AG04450 (cell line): ENCODE measurements at regions of chr1 and their contacts with region 1.

Region 1: DNA sequence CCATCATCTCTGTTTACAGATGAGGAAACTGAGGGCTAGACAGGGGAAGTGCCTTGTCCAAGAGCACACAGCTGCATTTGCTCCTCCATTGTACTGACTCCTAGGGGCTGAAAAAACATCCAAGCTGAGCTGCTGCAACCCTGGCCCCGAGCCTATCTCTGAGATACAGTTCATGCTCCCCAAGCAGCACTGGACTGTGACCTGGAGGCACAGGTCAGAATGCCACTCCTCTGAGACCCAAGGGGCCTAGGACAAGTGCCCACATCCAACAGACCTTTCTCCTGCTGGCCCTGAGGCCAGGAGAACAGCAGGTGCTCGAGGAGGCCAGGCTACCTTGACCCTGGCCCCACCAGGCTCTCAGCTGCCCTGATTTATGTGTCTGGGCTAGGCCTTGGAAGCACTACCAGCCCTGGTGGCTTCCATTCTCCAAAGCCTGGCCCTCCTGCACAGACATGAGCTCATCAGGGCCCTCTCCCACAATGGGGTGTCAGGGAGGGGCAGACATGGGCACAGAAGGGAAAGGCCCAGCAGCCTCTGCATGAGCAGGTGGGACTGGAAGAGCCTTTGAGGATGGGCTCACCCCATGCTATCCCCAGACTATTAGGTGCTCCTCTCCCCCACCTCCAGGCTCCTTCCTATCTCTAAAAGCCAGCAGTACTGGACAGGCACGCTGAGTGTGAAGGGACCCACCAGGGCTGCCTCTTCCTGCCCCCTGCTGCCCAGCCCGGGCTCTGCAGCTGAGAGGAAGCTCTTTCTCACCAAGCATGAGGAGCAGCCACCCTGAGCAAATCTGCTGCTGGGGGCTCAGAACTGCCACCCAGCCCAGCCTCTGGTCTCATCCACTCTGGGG is 18.8 kb downstream of the ADGRB2 start:
- DNase-seq: no peak
- H3K4me3 ChIP-seq: no peak overlapping the region
- H3K27ac ChIP-seq: no peak overlapping the region
- H3K27me3 ChIP-seq: no peaks in the 10 kb centered on the region
- CTCF ChIP-seq: peak; percentile 86

Region 2: GRCh38 chr1:31593770-31594632 is 151.3 kb before region 1 on chr1:
- CTCF ChIA-PET with region 1: no interaction called
- POLR2A ChIA-PET with region 1: no interaction called
- DNase-seq: peak; percentile 46
- H3K4me3 ChIP-seq: no peak overlapping the region
- H3K27ac ChIP-seq: no peak overlapping the region
- H3K27me3 ChIP-seq: peaks cover 9% of the 10 kb centered on the region
- CTCF ChIP-seq: peak; percentile 97

Region 3: GRCh38 chr1:31663622-31664452 is 81.5 kb before region 1 on chr1:
- CTCF ChIA-PET with region 1: interaction called, 21 read pairs
- POLR2A ChIA-PET with region 1: interaction called, 3 read pairs
- DNase-seq: no peak
- H3K4me3 ChIP-seq: no peak overlapping the region
- H3K27ac ChIP-seq: no peak overlapping the region
- H3K27me3 ChIP-seq: no peaks in the 10 kb centered on the region
- CTCF ChIP-seq: peak; percentile 92

Region 4: DNA sequence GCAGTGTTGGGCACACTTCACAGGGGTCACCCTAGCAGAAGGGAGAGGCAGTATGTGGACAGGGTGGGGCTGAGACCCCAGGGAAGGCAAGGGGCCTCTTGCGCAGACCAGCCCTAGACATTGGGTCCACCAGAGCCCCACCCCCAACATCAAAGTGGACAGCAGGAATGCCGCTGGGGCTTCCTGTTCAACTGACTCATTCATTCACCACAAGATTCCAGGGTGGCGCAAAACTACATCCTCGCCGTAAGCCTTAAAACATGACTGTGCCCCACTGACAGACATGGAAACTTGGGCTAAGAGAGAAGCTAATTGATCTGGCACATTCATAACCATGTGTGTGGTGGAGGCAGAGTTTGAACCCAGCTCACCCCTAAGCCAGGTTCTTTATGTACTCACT is 55.5 kb before region 1 on chr1:
- CTCF ChIA-PET with region 1: no interaction called
- POLR2A ChIA-PET with region 1: no interaction called
- DNase-seq: peak; percentile 85
- H3K4me3 ChIP-seq: no peak overlapping the region
- H3K27ac ChIP-seq: peak overlapping the region; percentile 93
- H3K27me3 ChIP-seq: no peaks in the 10 kb centered on the region
- CTCF ChIP-seq: no peak

Region 5: DNA sequence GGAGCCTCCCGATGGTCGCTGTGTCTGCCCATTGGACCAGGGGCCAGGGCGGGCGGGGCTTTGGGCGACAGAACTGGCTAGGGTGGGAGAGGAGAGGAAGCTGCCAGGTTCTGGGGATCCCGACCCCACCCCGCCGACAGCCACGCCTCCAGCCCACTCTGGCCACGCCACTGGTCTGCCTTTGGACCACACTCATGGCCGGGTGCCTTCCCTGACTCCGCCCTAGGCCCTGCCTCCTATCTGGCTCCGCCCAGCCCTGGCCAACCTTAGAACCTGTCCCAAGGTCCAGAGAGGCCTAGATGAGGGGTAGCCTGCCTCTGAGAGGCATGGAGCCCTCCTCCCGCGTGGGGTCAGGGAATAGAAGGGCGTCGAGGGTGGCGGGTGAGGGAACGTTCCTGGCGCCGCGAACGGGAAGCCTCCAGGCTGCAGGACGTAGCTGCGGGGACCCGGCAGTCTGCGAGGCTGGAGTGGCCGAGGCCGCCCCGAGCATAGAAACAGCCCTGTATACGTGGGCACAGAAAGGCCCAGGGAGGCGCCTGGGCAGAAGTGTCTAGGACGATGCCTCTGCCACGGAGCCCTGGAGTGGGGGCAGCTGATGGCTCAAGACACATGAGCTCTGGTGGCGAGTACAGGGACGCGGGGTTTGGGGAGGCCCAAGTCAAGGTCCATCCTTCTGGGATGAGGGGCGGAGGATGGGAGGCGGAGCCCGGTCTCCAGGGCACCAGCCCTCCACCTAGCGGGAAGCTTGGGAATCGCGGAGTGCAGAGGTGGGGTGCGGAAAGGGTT is 30.0 kb before region 1 on chr1:
- CTCF ChIA-PET with region 1: interaction called, 28 read pairs
- POLR2A ChIA-PET with region 1: no interaction called
- DNase-seq: peak; percentile 55
- H3K4me3 ChIP-seq: peak overlapping the region; percentile 48
- H3K27ac ChIP-seq: peak overlapping the region; percentile 84
- H3K27me3 ChIP-seq: peaks cover 5% of the 10 kb centered on the region
- CTCF ChIP-seq: peak; percentile 92

Region 6: DNA sequence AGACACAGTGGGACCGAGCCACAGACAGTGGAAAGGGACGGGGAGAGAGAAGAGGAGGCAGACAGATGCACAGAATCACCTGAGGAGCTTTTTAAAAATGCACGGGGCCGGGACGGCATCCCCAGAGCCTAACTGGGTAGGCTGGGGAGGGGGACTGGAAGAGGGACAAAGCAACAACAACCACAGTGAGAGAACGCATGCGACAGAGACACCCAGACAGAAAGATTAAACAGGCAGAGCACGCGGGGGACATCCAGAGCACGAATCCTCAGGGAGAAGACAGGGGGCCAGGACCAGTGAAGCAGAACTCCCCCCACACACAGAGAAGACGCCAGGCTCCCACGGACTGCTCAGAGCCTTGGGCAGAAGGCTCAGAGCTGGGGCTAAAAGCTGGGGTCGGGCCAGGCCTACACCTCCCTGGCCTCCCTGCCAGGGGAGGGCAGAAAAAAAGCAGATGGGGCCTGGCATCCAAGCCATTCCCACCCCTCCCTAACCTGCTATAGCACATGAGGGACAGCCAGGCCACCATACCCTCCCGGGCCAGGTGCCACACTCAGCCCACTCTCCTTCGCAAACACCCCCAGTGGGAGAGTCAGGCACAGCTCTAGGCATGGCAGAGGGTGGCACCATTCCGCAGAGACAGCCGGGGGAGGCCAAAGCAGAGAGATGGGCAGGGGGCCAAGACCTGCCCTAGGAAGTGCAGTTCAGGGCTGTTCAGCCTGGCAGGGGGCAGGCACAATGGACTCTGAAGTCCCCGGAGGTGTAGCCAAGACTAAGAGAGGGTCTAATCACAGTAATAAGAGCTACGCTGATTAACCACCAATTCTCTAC is 11.7 kb before region 1 on chr1:
- CTCF ChIA-PET with region 1: interaction called, 23 read pairs
- POLR2A ChIA-PET with region 1: no interaction called
- DNase-seq: no peak
- H3K4me3 ChIP-seq: no peak overlapping the region
- H3K27ac ChIP-seq: no peak overlapping the region
- H3K27me3 ChIP-seq: no peaks in the 10 kb centered on the region
- CTCF ChIP-seq: no peak

Region 7: DNA sequence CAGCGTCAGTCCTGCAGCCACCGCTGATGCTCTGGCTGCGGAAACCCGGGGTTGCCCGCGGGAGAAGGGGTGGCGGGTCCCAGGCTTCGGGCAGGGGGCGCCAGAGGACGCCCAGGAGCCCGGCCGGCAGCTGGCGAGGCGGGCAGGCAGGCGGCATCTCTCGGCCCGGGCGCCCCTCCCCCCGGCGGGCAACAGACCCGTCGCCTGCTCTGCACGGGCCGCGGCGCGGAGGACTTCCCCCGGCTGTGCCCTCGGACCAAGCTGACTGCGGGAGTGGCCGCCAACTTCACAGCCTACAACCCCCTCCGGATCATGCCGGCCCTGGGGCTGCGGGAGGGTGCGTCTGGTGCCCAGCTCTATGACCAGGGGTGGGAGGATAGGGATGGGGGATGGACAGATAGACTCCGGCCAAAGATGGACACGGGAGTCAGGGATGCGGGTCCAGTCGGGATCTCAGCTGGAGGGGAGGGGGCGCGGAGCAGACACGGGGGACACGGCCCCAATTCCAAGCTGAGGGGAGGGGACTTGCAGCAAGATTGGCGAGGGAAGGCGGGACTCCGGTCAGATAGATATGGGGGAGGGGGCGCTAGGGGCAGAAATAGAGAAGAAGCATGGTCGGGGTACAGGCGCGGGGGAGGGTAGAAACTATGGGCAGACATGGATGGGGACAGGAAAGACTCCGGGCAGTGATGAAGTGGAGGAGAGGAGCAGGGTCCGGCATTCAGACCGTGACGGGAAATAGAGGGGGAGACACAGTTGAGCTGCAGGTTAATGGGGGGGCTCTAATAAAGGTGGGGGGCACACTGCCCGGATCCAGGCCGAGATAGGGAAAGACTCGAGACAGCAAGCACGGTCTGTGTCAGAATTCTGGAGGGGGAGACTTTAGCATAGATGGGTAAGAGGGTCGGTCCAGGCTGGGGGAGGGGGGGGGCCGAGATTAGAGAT is 17.7 kb after region 1 on chr1:
- CTCF ChIA-PET with region 1: interaction called, 14 read pairs
- POLR2A ChIA-PET with region 1: no interaction called
- DNase-seq: no peak
- H3K4me3 ChIP-seq: peak overlapping the region; percentile 65
- H3K27ac ChIP-seq: no peak overlapping the region
- H3K27me3 ChIP-seq: no peaks in the 10 kb centered on the region
- CTCF ChIP-seq: peak; percentile 55

Region 8: DNA sequence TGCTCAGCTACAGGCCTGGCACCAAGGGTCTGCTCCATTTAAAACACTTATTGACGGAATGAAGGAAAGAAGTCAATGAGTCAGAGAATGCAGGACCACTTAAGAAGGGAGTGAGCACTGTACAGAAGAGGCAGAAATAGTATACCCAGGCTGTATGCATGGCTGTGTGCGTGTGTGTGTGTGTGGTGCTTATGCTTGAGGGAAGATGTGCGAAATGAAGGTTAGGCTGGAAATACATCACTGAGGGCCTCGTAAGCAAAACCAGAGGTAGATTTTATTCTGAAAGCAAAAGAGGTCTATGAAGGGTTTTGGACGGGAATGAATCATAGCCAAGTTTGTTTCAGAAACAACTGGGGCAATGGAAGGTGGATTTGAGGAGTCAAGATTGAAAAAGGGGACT is 28.5 kb after region 1 on chr1:
- CTCF ChIA-PET with region 1: no interaction called
- POLR2A ChIA-PET with region 1: no interaction called
- DNase-seq: no peak
- H3K4me3 ChIP-seq: no peak overlapping the region
- H3K27ac ChIP-seq: no peak overlapping the region
- H3K27me3 ChIP-seq: peaks cover 49% of the 10 kb centered on the region
- CTCF ChIP-seq: no peak

Region 9: GRCh38 chr1:31789259-31790065 is 44.1 kb after region 1 on chr1:
- CTCF ChIA-PET with region 1: interaction called, 15 read pairs
- POLR2A ChIA-PET with region 1: no interaction called
- DNase-seq: peak; percentile 80
- H3K4me3 ChIP-seq: peak overlapping the region; percentile 87
- H3K27ac ChIP-seq: peak overlapping the region; percentile 81
- H3K27me3 ChIP-seq: no peaks in the 10 kb centered on the region
- CTCF ChIP-seq: peak; percentile 94